ENCODE measurements at regions of chr5 and their contacts with region 1.

Region 1: DNA sequence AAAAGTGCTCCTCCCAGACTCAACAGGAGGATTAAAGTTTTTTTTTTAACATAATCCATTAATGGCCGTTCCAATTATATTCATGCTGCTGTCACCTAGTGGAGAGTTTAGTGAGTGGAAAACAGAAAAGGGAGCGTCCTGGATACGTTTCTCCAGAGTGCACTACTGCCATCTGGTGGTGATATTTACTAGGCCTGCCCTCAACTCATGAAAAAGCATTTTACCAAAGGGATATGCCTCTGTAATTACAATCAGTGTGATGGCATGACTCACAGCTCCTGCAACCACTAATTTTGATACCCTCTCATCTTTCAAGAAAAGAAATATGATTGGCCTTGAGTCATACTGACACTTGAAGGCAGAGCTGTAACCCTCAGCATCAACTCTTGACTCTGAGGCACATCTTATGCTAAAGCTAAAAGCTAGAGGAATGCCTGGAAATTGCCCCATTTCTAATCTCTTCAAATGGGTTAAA is 20.0 kb downstream of the MINAR2 start:
- DNase-seq: peak; percentile 88
- H3K4me3 Mint-ChIP-seq: no peak overlapping the region
- H3K27ac Mint-ChIP-seq: no peak overlapping the region
- H3K4me1 Mint-ChIP-seq: peaks cover 2% of the 10 kb centered on the region
- H3K27me3 Mint-ChIP-seq: no peaks in the 10 kb centered on the region

Region 2: DNA sequence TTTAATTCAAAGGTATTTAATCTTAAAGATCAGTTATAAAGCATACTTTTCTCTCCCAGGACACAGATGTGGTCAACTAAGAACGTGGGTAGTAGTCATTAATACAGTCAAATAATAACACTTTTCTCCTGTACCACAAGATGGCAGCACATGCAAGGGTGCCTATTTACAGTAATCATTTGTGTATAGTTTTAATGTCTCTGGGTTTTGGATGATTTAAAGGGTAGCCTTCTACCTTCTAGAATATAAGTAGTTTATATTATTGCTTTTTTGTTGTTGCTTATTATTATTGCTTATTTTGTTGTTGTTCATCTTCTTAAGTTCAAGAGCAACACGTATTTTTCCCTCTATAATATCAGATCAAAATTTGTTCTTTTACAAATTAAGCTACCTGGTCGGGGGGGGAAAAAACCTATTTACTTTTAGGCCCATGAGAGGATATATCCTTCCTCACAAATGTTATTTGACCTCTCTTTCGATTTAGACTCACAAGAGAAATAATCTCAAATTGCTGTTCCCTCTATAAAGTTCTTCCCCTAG is 862.3 kb before region 1 on chr5:
- CTCF ChIA-PET with region 1: interaction called, 9 read pairs
- intact Hi-C with region 1: loop called (anchors 1 kb)
- DNase-seq: peak; percentile 49
- H3K4me3 Mint-ChIP-seq: no peak overlapping the region
- H3K27ac Mint-ChIP-seq: no peak overlapping the region
- H3K4me1 Mint-ChIP-seq: no peaks in the 10 kb centered on the region
- H3K27me3 Mint-ChIP-seq: peaks cover under 1% of the 10 kb centered on the region

Region 3: GRCh38 chr5:129172580-129172979 is 595.4 kb before region 1 on chr5:
- CTCF ChIA-PET with region 1: no interaction called
- intact Hi-C with region 1: loop called (anchors 1 kb)
- DNase-seq: no peak
- H3K4me3 Mint-ChIP-seq: no peak overlapping the region
- H3K27ac Mint-ChIP-seq: no peak overlapping the region
- H3K4me1 Mint-ChIP-seq: no peaks in the 10 kb centered on the region
- H3K27me3 Mint-ChIP-seq: no peaks in the 10 kb centered on the region

Region 4: DNA sequence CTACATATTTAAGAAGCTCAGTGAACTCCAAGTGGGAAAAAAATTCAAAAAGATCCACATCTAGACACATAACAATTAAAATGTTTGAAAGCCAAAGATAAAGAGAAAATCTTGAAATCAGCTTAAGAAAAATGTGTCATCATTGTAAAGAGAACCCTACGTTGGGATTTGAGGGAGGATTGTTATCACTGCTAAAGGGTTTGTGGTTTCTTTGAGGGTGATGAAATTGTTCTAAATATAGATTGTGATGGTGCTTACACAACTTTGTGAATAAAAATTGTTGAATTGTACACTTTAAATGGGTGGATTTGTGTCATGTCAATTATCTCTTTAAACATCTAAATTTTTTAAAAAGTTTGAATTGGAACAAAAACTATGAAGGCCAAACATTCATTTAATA is 400.1 kb before region 1 on chr5:
- CTCF ChIA-PET with region 1: no interaction called
- intact Hi-C with region 1: no loop called
- DNase-seq: no peak
- H3K4me3 Mint-ChIP-seq: no peak overlapping the region
- H3K27ac Mint-ChIP-seq: no peak overlapping the region
- H3K4me1 Mint-ChIP-seq: no peaks in the 10 kb centered on the region
- H3K27me3 Mint-ChIP-seq: no peaks in the 10 kb centered on the region

Region 5: DNA sequence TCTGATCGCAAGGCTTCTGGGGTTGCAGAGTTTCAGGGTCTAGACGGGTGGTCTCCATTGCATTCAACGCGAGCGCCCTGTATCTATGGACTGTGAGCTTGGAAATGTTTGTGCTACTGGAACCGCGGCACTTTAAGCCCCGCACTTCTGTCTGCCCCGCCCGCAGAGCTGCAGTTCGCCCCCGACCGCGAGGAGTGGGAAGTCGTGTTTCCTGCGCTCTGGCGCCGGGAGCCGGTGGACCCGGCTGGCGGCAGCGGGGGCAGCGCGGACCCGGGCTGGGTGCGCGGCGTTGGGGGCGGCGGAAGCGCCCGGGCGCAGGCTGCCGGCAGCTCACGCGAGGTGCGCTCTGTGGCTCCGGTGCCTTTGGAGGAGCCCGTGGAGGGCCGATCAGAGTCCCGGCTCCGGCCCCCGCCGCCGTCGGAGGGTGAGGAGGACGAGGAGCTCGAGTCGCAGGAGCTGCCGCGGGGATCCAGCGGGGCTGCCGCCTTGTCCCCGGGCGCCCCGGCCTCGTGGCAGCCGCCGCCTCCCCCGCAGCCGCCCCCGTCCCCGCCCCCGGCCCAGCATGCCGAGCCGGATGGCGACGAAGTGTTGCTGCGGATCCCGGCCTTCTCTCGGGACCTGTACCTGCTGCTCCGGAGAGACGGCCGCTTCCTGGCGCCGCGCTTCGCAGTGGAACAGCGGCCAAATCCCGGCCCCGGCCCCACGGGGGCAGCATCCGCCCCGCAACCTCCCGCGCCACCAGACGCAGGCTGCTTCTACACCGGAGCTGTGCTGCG is 306.8 kb before region 1 on chr5:
- CTCF ChIA-PET with region 1: no interaction called
- intact Hi-C with region 1: loop called (anchors 1 kb)
- DNase-seq: peak; percentile 29
- H3K4me3 Mint-ChIP-seq: peak overlapping the region; percentile 38
- H3K27ac Mint-ChIP-seq: no peak overlapping the region
- H3K4me1 Mint-ChIP-seq: peaks cover 12% of the 10 kb centered on the region
- H3K27me3 Mint-ChIP-seq: peaks cover 48% of the 10 kb centered on the region

Region 6: DNA sequence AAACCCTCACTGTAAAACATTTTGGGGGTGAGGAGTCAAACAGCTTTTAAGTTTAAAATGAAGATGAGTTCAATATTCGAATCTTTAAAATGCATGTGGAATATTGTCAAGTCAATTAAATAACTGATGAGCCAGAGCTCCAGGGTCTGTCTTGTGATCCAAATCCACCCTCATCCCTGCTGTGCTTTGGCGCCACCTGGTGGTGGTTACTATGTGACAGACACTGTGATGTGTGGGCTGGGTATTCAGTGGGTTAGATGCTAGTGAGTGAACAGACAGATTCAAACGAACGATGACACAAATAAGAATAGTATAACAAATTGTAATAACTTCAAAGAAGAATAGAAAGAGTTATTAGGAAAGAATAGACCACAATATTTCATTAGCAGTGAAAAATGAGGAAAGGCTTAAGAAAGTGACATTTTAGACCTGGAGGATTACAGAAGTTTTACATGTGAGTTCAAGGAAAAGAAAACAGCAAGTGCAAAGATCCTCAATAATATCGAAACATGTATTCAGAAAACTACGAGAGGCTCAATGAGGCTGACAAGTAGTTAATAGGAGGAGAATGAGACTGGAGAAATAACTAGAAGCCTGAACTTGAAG is 84.9 kb after region 1 on chr5:
- CTCF ChIA-PET with region 1: interaction called, 152 read pairs
- intact Hi-C with region 1: loop called (anchors 1 kb)
- DNase-seq: peak; percentile 85
- H3K4me3 Mint-ChIP-seq: no peak overlapping the region
- H3K27ac Mint-ChIP-seq: no peak overlapping the region
- H3K4me1 Mint-ChIP-seq: no peaks in the 10 kb centered on the region
- H3K27me3 Mint-ChIP-seq: peaks cover 18% of the 10 kb centered on the region

Region 7: GRCh38 chr5:131109540-131110255 is 1341.8 kb after region 1 on chr5:
- CTCF ChIA-PET with region 1: no interaction called
- intact Hi-C with region 1: loop called (anchors 1 kb)
- DNase-seq: peak; percentile 54
- H3K4me3 Mint-ChIP-seq: no peak overlapping the region
- H3K27ac Mint-ChIP-seq: no peak overlapping the region
- H3K4me1 Mint-ChIP-seq: peaks cover 6% of the 10 kb centered on the region
- H3K27me3 Mint-ChIP-seq: no peaks in the 10 kb centered on the region

Measured in activated naive CD4-positive, alpha-beta T cell treated with anti-CD3 and anti-CD28 coated beads for 36 hours (primary cell).